ENCODE measurements at regions of chr17 and their contacts with region 1.

Region 1: GRCh38 chr17:29212681-29213121 is 32.5 kb upstream of the MYO18A start:
- DNase-seq: peak; percentile 81
- H3K4me3 ChIP-seq: no peak overlapping the region
- H3K27ac ChIP-seq: peak overlapping the region; percentile 51
- H3K4me1 ChIP-seq: peaks cover 39% of the 10 kb centered on the region
- H3K27me3 ChIP-seq: no peaks in the 10 kb centered on the region
- CTCF ChIP-seq: no peak

Region 2: DNA sequence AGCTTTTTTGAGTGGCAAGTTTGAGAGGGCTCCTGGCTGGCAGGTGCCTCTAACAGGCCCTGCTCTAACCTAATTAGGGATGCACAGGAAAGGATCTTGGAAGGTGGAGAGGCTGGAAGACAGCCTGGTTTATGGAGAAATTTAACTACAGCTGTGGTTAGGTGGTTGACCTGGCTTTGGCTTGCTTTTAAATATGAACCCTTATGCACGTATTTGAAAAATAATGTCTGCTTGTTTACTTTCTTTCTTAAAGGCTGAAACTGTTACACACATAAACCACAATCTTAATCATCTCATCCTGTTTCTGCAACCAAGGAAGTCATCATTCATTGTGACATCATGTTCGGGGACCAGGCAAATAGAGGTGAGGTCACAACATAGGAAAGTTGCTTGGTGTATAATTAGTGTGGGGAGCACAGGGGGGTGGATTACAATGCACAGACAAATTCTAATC is 286.8 kb before region 1 on chr17:
- CTCF ChIA-PET with region 1: no interaction called
- dilution Hi-C with region 1: no loop called
- in situ Hi-C with region 1: no loop called
- intact Hi-C with region 1: no loop called
- DNase-seq: peak; percentile 95
- H3K4me3 ChIP-seq: no peak overlapping the region
- H3K27ac ChIP-seq: peak overlapping the region; percentile 60
- H3K4me1 ChIP-seq: peaks cover 26% of the 10 kb centered on the region
- H3K27me3 ChIP-seq: no peaks in the 10 kb centered on the region
- CTCF ChIP-seq: no peak

Region 3: DNA sequence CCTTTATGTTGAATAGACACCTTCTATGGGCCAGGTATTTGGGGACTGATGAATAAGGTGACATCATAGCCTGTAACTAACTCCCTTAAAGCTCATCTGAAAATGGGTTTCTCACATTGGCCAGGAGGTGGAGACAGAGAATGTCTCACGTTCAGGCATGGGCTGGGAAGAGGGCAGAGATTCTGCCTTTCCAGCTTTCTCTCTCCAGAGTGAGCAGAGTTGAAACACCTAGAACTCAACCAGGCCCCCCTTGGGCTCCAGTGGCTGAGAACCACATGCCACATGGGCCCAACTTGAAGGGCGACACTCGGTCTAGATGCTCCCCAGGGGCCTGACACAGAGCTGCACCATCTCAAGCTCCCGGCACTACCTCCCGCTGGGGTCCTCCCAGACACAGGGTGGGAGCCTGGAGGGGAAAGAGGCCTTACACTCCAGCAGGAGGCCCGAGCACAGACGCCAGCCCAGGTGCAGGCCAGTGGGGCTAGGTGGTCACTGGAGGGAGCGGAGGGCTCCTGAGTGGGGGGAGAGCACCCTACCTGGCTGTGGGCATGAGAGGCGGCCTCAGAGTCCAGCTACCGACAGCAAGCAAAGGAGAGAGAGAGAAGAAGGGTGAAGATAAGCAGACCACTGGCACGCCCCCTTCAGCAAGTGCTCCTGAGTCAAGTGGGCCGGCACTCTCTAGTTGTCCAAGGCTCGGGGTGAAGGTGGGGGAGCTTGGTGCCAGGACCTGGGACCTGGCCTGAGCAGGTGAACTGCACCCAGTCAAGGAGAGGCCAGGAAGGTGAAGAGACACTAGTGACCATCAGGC is 88.4 kb before region 1 on chr17:
- CTCF ChIA-PET with region 1: no interaction called
- dilution Hi-C with region 1: no loop called
- in situ Hi-C with region 1: no loop called
- intact Hi-C with region 1: no loop called
- DNase-seq: peak; percentile 68
- H3K4me3 ChIP-seq: no peak overlapping the region
- H3K27ac ChIP-seq: no peak overlapping the region
- H3K4me1 ChIP-seq: peaks cover 3% of the 10 kb centered on the region
- H3K27me3 ChIP-seq: no peaks in the 10 kb centered on the region
- CTCF ChIP-seq: peak; percentile 70 to 78

Region 4: GRCh38 chr17:29155227-29155965 is 57.3 kb before region 1 on chr17:
- CTCF ChIA-PET with region 1: interaction called, 9 read pairs
- dilution Hi-C with region 1: loop called (anchors 5 kb)
- in situ Hi-C with region 1: loop called in 1 of 2 experiments (anchors 10 kb)
- intact Hi-C with region 1: no loop called
- DNase-seq: peak; percentile 85
- H3K4me3 ChIP-seq: no peak overlapping the region
- H3K27ac ChIP-seq: peak overlapping the region; percentile 81
- H3K4me1 ChIP-seq: peaks cover 92% of the 10 kb centered on the region
- H3K27me3 ChIP-seq: no peaks in the 10 kb centered on the region
- CTCF ChIP-seq: no peak

Region 5: GRCh38 chr17:29180034-29180787 is 32.5 kb before region 1 on chr17 and contains the start of gene MYO18A:
- CTCF ChIA-PET with region 1: interaction called, 13 read pairs
- dilution Hi-C with region 1: no loop called
- in situ Hi-C with region 1: no loop called
- intact Hi-C with region 1: no loop called
- DNase-seq: peak; percentile 78
- H3K4me3 ChIP-seq: peak within 1 kb of the TSS; percentile 39 to 66 (median 56)
- H3K27ac ChIP-seq: peak within 1 kb of the TSS; percentile 95
- H3K4me1 ChIP-seq: peaks cover 47% of the 10 kb centered on the region
- H3K27me3 ChIP-seq: no peaks in the 10 kb centered on the region
- CTCF ChIP-seq: peak; percentile 63 to 83
- total RNA-seq, gene MYO18A: 62.3 to 102 TPM

Region 6: DNA sequence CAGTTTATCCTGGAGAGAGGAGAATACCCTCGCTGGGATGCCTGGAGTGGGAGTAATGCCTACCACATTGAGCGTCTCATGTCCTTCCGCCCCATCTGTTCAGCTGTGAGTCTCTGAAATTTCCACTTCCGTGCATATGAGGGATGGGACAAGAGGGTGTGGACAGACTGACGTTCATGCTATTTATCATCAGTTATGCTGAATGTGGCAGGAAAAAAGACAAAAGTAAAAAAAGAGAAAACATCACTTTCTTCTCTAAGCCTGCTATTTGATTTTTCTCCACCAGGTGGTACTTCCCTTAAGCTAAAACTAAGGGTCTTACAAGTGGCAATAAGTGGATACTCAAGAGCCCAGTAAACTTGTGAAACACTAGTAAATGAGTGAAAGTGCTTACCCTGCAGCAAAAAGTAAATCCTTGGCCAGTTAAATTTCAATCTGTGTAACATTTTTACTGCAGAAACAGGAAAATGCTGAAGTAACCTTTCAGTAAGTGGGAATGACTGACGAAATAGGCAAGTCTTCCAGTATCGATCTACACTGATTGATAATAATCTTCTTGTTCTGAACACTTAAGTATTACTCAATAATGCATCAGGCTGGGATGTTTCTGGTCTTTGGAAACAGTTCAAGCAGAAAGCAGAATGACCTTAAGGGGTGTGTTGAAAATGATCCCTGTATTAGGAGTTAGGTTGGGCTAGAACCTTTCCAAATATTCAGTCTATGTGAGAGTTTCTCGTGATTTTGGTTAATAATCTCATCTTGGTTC is 39.6 kb after region 1 on chr17:
- CTCF ChIA-PET with region 1: no interaction called
- dilution Hi-C with region 1: loop called (anchors 5 kb)
- in situ Hi-C with region 1: no loop called
- intact Hi-C with region 1: no loop called
- DNase-seq: no peak
- H3K4me3 ChIP-seq: no peak overlapping the region
- H3K27ac ChIP-seq: no peak overlapping the region
- H3K4me1 ChIP-seq: peaks cover 7% of the 10 kb centered on the region
- H3K27me3 ChIP-seq: no peaks in the 10 kb centered on the region
- CTCF ChIP-seq: peak; percentile 37 to 47